ENCODE measurements at regions of chr22 and their contacts with region 1.

Region 1: GRCh38 chr22:46079861-46080821 is 70.2 kb upstream of the PPARA start:
- DNase-seq: peak; percentile 74 to 77
- ATAC-seq: peak; percentile 28 to 69 (median 31)
- H3K4me3 ChIP-seq: peak overlapping the region; percentile 13 to 98 (median 83)
- H3K27ac ChIP-seq: peak overlapping the region; percentile 93 to 100 (median 98)
- H3K4me1 ChIP-seq: peaks cover 42 to 100% (median 92%) of the 10 kb centered on the region in 9 donors
- H3K27me3 ChIP-seq: no peaks in the 10 kb centered on the region
- CTCF ChIP-seq: peak in 1 of 9 donors; percentile 2

Region 2: GRCh38 chr22:46006379-46007002 is 73.7 kb before region 1 on chr22:
- intact Hi-C with region 1: loop called in 3 of 10 experiments (anchors 5 to 10 kb)
- DNase-seq: peak; percentile 96 to 97
- ATAC-seq: peak; percentile 55 to 85 (median 76)
- H3K4me3 ChIP-seq: peak overlapping the region in 8 of 10 donors; percentile 3 to 40 (median 32)
- H3K27ac ChIP-seq: peak overlapping the region; percentile 90 to 100 (median 96)
- H3K4me1 ChIP-seq: peaks cover 39 to 76% (median 63%) of the 10 kb centered on the region in 9 donors
- H3K27me3 ChIP-seq: no peaks in the 10 kb centered on the region
- CTCF ChIP-seq: peak; percentile 92 to 98 (median 97)

Region 3: DNA sequence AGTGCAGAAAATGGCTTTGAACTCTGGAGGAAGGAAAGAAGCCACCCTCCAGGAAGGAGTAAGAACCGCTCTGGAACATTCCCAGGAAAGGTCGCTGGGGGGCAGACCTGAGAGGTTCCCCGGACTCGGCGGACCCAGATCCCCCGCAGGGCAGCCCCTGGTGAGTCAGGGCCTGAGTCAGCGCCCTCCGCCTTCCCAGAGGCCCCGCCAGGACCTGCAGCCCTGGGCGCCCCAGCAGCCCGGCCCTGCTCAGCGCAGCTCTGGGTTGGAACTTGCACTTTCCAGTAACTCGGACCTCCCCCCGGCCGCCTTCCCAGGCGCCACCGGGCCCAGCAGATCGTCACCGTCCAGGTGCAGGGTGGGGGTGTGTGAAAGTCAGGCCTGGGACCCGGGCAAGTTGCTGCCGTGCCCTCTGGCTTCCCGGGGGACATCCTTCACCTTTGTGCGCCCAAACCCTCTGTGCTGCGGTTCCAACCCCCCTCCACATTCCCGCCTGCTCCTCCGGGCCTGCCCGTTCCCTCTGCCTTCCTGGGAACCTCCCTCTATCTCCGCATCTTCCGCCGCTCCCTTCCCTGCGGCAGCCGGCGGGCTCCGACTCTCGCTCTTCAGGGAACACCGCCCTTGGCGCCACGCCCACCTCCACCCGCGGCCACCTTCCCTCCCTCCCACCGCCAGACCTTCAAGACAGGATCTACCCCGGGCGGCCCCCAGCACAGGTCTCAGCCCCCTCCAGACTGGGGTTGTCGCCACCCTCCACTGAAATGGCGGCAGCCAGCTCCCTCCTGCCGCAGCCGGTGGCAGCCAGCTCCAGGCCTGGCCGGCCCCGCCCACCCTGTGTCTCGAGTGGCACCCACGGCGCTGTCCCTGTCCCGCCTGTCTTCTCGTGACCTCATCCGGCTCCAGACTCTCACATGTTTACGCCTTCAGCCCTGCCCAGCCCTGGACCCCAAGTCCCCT is 66.4 kb before region 1 on chr22:
- intact Hi-C with region 1: loop called in 4 of 10 experiments (anchors 2 to 10 kb)
- DNase-seq: peak; percentile 94
- ATAC-seq: peak; percentile 91 to 96 (median 95)
- H3K4me3 ChIP-seq: peak overlapping the region; percentile 27 to 79 (median 63)
- H3K27ac ChIP-seq: peak overlapping the region; percentile 92 to 100 (median 96)
- H3K4me1 ChIP-seq: peaks cover 7 to 49% (median 33%) of the 10 kb centered on the region in 9 donors
- H3K27me3 ChIP-seq: no peaks in the 10 kb centered on the region
- CTCF ChIP-seq: peak; percentile 56 to 86 (median 76)

Region 4: DNA sequence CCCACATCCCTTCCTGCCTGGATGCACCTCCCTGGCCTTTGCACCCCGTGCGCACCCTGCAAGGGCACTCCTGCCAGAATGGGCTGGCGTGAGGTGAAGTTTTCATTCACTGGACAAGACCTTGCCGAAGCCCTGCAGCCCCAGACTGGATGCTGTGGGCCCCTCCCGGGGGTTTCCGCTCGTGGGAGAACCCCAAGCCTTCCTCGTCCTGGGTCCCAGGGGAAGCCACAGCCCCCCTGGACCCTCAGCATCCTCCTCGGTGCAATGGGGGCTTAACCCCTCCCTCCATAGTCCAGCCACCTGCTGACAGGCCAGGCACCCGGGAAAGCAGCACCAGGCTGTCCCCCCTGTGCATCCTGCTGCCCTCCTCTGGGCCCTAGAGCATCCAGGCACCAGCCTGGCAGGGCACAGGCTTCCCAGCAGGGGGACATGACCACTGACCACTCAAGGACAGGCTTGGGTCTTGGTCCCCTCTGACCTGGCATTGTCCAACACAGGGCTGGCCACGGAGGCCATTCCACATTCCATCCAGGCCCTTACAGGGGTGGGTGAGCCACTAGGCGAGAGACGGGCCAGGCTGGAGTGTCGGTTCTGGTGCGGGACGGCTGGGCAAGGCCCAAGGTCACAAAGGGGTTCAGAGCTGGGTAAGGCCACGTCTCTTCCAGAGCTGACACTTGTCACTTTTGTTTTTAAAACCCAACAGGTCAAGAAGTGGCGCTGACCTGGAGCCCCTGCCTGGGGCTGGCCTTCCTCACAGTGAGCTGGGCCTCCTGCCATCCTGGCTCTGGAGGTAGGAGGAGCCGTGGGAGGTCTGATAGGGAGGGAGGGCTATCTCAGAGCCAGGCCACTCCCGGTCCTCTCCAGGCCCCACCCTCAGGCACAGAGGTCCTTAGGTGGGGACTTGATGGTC is 28.7 kb after region 1 on chr22:
- intact Hi-C with region 1: loop called in 3 of 10 experiments (anchors 5 kb)
- DNase-seq: peak; percentile 71 to 73
- ATAC-seq: peak; percentile 15 to 53 (median 36)
- H3K4me3 ChIP-seq: no peak overlapping the region
- H3K27ac ChIP-seq: peak overlapping the region; percentile 16 to 94 (median 86)
- H3K4me1 ChIP-seq: peaks cover 87 to 100% (median 99%) of the 10 kb centered on the region in 9 donors
- H3K27me3 ChIP-seq: no peaks in the 10 kb centered on the region
- CTCF ChIP-seq: no peak

Region 5: DNA sequence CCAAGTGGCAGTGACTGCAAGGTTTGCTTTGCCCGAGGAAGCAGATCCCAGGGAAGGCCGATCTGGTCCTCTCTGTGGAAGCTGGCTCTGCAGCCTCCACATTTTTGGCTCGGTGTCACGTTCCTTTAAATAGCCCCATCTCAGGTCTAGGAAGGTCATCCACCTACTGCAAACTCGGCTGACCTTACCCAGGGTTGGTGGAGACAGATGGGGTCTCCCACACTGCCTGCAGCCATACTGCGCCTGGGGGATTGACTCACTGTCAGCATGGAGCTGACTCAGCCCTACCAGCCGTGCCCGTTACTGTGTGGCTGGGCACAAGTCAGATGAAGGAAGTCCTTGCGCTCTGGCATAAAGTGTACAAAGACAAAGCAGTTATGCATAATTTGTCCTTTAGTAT is 153.1 kb after region 1 on chr22:
- intact Hi-C with region 1: no loop called
- DNase-seq: peak; percentile 42 to 66
- ATAC-seq: peak; percentile 74 to 96 (median 88)
- H3K4me3 ChIP-seq: no peak overlapping the region
- H3K27ac ChIP-seq: peak overlapping the region in 9 of 10 donors; percentile 10 to 82 (median 62)
- H3K4me1 ChIP-seq: peaks cover under 1 to 38% (median 16%) of the 10 kb centered on the region in 9 donors
- H3K27me3 ChIP-seq: no peaks in the 10 kb centered on the region
- CTCF ChIP-seq: no peak

Measured in heart right ventricle (tissue), 16 donors.